ENCODE measurements at regions of chr9 and their contacts with region 1.

Region 1: GRCh38 chr9:129413537-129414376 is 207.1 kb downstream of the C9orf50 start:
- DNase-seq: peak; percentile 96 to 98 (median 96)
- ATAC-seq: peak; percentile 87
- H3K4me3 ChIP-seq: peak overlapping the region; percentile 53
- H3K27ac ChIP-seq: peak overlapping the region; percentile 99
- H3K4me1 ChIP-seq: peaks cover 45 to 55% of the 10 kb centered on the region in 2 experiments
- H3K27me3 ChIP-seq: no peaks in the 10 kb centered on the region
- CTCF ChIP-seq: no peak
- EP300 ChIP-seq: peak; percentile 57; the same call in 1 of the 2 replicates
- POLR2A ChIP-seq: peak; percentile 72
- RAD21 ChIP-seq: no peak

Region 2: DNA sequence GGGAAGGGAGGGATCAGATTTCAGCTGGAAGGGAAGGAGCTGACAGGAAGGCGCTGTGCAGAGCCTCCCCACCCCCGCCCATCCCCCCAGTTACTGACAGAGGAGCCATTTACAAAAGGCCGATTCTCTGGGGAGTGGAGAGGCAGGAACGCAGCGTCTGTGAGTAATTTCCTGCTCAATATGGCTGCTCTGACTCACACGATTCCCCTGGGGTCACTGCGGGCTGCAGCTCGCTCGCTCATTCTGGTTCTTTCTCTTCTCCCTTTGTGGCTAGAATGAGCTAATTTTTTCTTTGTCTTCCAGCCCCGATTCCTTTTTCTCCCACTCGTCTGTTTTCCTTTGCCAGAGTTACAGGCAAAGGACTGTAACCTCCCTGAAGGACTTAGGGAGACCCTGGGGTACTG is 273.8 kb before region 1 on chr9:
- CTCF ChIA-PET with region 1: no interaction called
- POLR2A ChIA-PET with region 1: no interaction called
- in situ Hi-C with region 1: no loop called
- intact Hi-C with region 1: no loop called
- DNase-seq: peak; percentile 61 to 94 (median 74)
- ATAC-seq: peak; percentile 86
- H3K4me3 ChIP-seq: peak overlapping the region; percentile 27
- H3K27ac ChIP-seq: peak overlapping the region; percentile 93
- H3K4me1 ChIP-seq: peaks cover 30 to 49% of the 10 kb centered on the region in 2 experiments
- H3K27me3 ChIP-seq: no peaks in the 10 kb centered on the region
- CTCF ChIP-seq: no peak
- EP300 ChIP-seq: peak; percentile 67
- POLR2A ChIP-seq: peak; percentile 55
- RAD21 ChIP-seq: no peak

Region 3: GRCh38 chr9:129458663-129459555 is 45.2 kb after region 1 on chr9:
- CTCF ChIA-PET with region 1: no interaction called
- POLR2A ChIA-PET with region 1: no interaction called
- in situ Hi-C with region 1: loop called (anchors 5 kb)
- intact Hi-C with region 1: no loop called
- DNase-seq: no peak
- ATAC-seq: no peak
- H3K4me3 ChIP-seq: no peak overlapping the region
- H3K27ac ChIP-seq: no peak overlapping the region
- H3K4me1 ChIP-seq: peaks cover 30 to 43% of the 10 kb centered on the region in 2 experiments
- H3K27me3 ChIP-seq: no peaks in the 10 kb centered on the region; a peak in 1 of 5 replicates
- CTCF ChIP-seq: no peak
- EP300 ChIP-seq: no peak
- POLR2A ChIP-seq: no peak
- RAD21 ChIP-seq: no peak

Region 4: GRCh38 chr9:129482521-129483414 is 69.0 kb after region 1 on chr9:
- CTCF ChIA-PET with region 1: no interaction called
- POLR2A ChIA-PET with region 1: no interaction called
- in situ Hi-C with region 1: loop called (anchors 5 kb)
- intact Hi-C with region 1: loop called (anchors 5 kb)
- DNase-seq: peak; percentile 79 to 87 (median 85)
- ATAC-seq: peak; percentile 83
- H3K4me3 ChIP-seq: peak overlapping the region; percentile 56
- H3K27ac ChIP-seq: peak overlapping the region; percentile 83
- H3K4me1 ChIP-seq: peaks cover 70 to 85% of the 10 kb centered on the region in 2 experiments
- H3K27me3 ChIP-seq: no peaks in the 10 kb centered on the region
- CTCF ChIP-seq: no peak
- EP300 ChIP-seq: no peak
- POLR2A ChIP-seq: peak; percentile 34; the same call in 1 of the 2 replicates
- RAD21 ChIP-seq: peak in 1 of 2 experiments; percentile 36; a peak in 3 of 4 replicates